ENCODE measurements at regions of chr1 and their contacts with region 1.

Region 1: GRCh38 chr1:224434691-224435317 is at the start of gene WDR26:
- DNase-seq: peak; percentile 74
- H3K4me3 ChIP-seq: peak within 1 kb of the TSS; percentile 62 to 91 (median 71)
- H3K27ac ChIP-seq: peak within 1 kb of the TSS; percentile 74
- H3K4me1 ChIP-seq: peaks cover 41% of the 10 kb centered on the region
- H3K27me3 ChIP-seq: no peaks in the 10 kb centered on the region
- CTCF ChIP-seq: peak in 1 of 2 donors; percentile 30
- total RNA-seq, gene WDR26: 56.5 to 74.5 TPM

Region 2: DNA sequence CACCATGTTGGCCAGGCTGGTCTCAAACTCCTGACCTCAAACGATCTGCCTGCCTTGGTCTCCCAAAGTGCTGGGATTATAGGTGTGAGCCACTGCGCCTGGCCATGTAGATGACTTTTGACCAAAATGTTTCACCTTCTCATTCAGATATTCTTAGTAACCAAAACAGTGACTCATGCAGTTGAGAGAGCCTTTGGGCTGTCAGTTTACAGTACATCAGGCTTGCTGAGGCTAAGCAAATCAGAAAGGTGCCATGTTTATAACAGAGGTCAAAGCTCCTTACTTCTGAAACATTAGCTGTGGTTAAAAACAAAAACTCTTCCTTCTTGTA is 57.2 kb before region 1 on chr1:
- CTCF ChIA-PET with region 1: no interaction called
- dilution Hi-C with region 1: no loop called
- in situ Hi-C with region 1: no loop called
- intact Hi-C with region 1: no loop called
- DNase-seq: peak; percentile 65
- H3K4me3 ChIP-seq: no peak overlapping the region
- H3K27ac ChIP-seq: no peak overlapping the region
- H3K4me1 ChIP-seq: peaks cover 25% of the 10 kb centered on the region
- H3K27me3 ChIP-seq: no peaks in the 10 kb centered on the region
- CTCF ChIP-seq: no peak

Region 3: GRCh38 chr1:224497714-224498573 is 63.1 kb after region 1 on chr1:
- CTCF ChIA-PET with region 1: interaction called, 5 read pairs
- dilution Hi-C with region 1: no loop called
- in situ Hi-C with region 1: no loop called
- intact Hi-C with region 1: loop called (anchors 1 kb)
- DNase-seq: peak; percentile 90
- H3K4me3 ChIP-seq: peak overlapping the region in 2 of 3 experiments; percentile 40 to 42
- H3K27ac ChIP-seq: peak overlapping the region; percentile 99
- H3K4me1 ChIP-seq: peaks cover 38% of the 10 kb centered on the region
- H3K27me3 ChIP-seq: no peaks in the 10 kb centered on the region
- CTCF ChIP-seq: no peak

Region 4: GRCh38 chr1:224528900-224529299 is 94.1 kb after region 1 on chr1:
- CTCF ChIA-PET with region 1: no interaction called
- dilution Hi-C with region 1: no loop called
- in situ Hi-C with region 1: no loop called
- intact Hi-C with region 1: no loop called
- DNase-seq: no peak
- H3K4me3 ChIP-seq: no peak overlapping the region
- H3K27ac ChIP-seq: no peak overlapping the region
- H3K4me1 ChIP-seq: peaks cover 31% of the 10 kb centered on the region
- H3K27me3 ChIP-seq: no peaks in the 10 kb centered on the region
- CTCF ChIP-seq: no peak